ENCODE measurements at regions of chr19 and their contacts with region 1.

Region 1: DNA sequence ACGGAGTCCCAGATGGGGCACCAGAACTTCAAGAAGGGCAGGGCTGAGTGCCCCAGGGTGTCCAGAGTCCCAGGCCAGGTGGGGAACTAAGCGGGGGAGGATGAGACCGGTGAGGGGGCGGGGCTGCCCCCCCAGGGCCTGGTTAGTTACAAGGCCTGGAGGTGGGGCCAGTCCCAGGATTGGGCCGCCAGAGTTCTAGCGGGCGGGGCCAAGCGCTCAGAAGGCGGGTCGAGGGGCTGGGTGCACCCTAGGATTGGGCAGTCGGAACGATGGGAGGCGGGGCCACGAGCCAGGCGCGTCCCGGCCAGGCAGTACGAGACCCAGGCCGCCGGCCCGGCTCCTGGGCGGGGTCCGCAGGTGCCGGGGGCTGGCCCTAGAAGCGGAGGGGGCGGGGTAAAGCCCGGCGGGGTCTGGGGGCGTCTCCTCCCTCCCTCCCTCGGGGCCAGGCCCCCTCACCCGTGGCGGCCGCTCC is 571 bp downstream of the ZNF653 start:
- DNase-seq: peak; percentile 97
- ATAC-seq: peak; percentile 90
- H3K4me3 ChIP-seq: peak overlapping the region in 4 of 5 experiments; percentile 62 to 98 (median 82)
- H3K4me3 Mint-ChIP-seq: peak overlapping the region; percentile 87
- H3K27ac ChIP-seq: peak overlapping the region; percentile 65 to 98
- H3K27ac Mint-ChIP-seq: peak overlapping the region; percentile 93
- H3K4me1 ChIP-seq: peaks cover 9 to 13% of the 10 kb centered on the region in 2 donors
- H3K4me1 Mint-ChIP-seq: peaks cover 13% of the 10 kb centered on the region
- H3K27me3 ChIP-seq: no peaks in the 10 kb centered on the region
- H3K27me3 Mint-ChIP-seq: no peaks in the 10 kb centered on the region
- CTCF ChIP-seq: no peak

Region 2: GRCh38 chr19:11346092-11346940 is 158.8 kb before region 1 on chr19 and contains the starts of genes CCDC159 and TMEM205:
- CTCF ChIA-PET with region 1: no interaction called
- POLR2A ChIA-PET with region 1: no interaction called
- intact Hi-C with region 1: loop called (anchors 1 kb)
- DNase-seq: peak; percentile 99
- ATAC-seq: peak; percentile 97
- H3K4me3 ChIP-seq: peak within 1 kb of the TSS; percentile 67 to 97 (median 94)
- H3K4me3 Mint-ChIP-seq: peak within 1 kb of the TSS; percentile 99
- H3K27ac ChIP-seq: peak within 1 kb of the TSS; percentile 71 to 86
- H3K27ac Mint-ChIP-seq: peak within 1 kb of the TSS; percentile 96
- H3K4me1 ChIP-seq: peaks cover 11 to 20% of the 10 kb centered on the region in 2 donors
- H3K4me1 Mint-ChIP-seq: peaks cover 28% of the 10 kb centered on the region
- H3K27me3 ChIP-seq: no peaks in the 10 kb centered on the region
- H3K27me3 Mint-ChIP-seq: no peaks in the 10 kb centered on the region
- CTCF ChIP-seq: no peak
- total RNA-seq, gene CCDC159: 56.0 and 57.5 TPM in 2 replicates
- total RNA-seq, gene TMEM205: 48.5 and 53.4 TPM in 2 replicates

Region 3: GRCh38 chr19:11435058-11435832 is 69.8 kb before region 1 on chr19 and contains the starts of genes ODAD3 and PRKCSH:
- CTCF ChIA-PET with region 1: no interaction called
- POLR2A ChIA-PET with region 1: no interaction called
- intact Hi-C with region 1: loop called (anchors 1 kb)
- DNase-seq: peak; percentile 99
- ATAC-seq: peak; percentile 88
- H3K4me3 ChIP-seq: peak within 1 kb of the TSS; percentile 76 to 95 (median 80)
- H3K4me3 Mint-ChIP-seq: peak within 1 kb of the TSS; percentile 96
- H3K27ac ChIP-seq: peak within 1 kb of the TSS; percentile 70 to 92
- H3K27ac Mint-ChIP-seq: peak within 1 kb of the TSS; percentile 88
- H3K4me1 ChIP-seq: peaks cover 27 to 40% of the 10 kb centered on the region in 2 donors
- H3K4me1 Mint-ChIP-seq: peaks cover 29% of the 10 kb centered on the region
- H3K27me3 ChIP-seq: no peaks in the 10 kb centered on the region
- H3K27me3 Mint-ChIP-seq: no peaks in the 10 kb centered on the region
- CTCF ChIP-seq: peak; percentile 94
- total RNA-seq, gene ODAD3: 0.27 and 0.62 TPM in 2 replicates
- total RNA-seq, gene PRKCSH: 364 and 402 TPM in 2 replicates

Region 4: GRCh38 chr19:11475861-11476260 is 29.2 kb before region 1 on chr19:
- CTCF ChIA-PET with region 1: no interaction called
- POLR2A ChIA-PET with region 1: no interaction called
- intact Hi-C with region 1: no loop called
- DNase-seq: no peak
- ATAC-seq: no peak
- H3K4me3 ChIP-seq: no peak overlapping the region
- H3K4me3 Mint-ChIP-seq: no peak overlapping the region
- H3K27ac ChIP-seq: no peak overlapping the region
- H3K27ac Mint-ChIP-seq: no peak overlapping the region
- H3K4me1 ChIP-seq: peaks cover 13 to 20% of the 10 kb centered on the region in 2 donors
- H3K4me1 Mint-ChIP-seq: peaks cover 9% of the 10 kb centered on the region
- H3K27me3 ChIP-seq: peaks cover 0 to 32% (median 10%) of the 10 kb centered on the region in 4 experiments
- H3K27me3 Mint-ChIP-seq: peaks cover 23% of the 10 kb centered on the region
- CTCF ChIP-seq: no peak

Region 5: GRCh38 chr19:11528551-11529341 is 23.7 kb after region 1 on chr19 and contains the start of gene ECSIT:
- CTCF ChIA-PET with region 1: interaction called, 4 read pairs
- POLR2A ChIA-PET with region 1: no interaction called
- intact Hi-C with region 1: loop called (anchors 1 kb)
- DNase-seq: peak; percentile 95
- ATAC-seq: peak; percentile 99
- H3K4me3 ChIP-seq: peak within 1 kb of the TSS; percentile 45 to 83 (median 79)
- H3K4me3 Mint-ChIP-seq: peak within 1 kb of the TSS; percentile 98
- H3K27ac ChIP-seq: peak within 1 kb of the TSS; percentile 58 to 79
- H3K27ac Mint-ChIP-seq: peak within 1 kb of the TSS; percentile 95
- H3K4me1 ChIP-seq: peaks cover 7 to 19% of the 10 kb centered on the region in 2 donors
- H3K4me1 Mint-ChIP-seq: peaks cover 16% of the 10 kb centered on the region
- H3K27me3 ChIP-seq: no peaks in the 10 kb centered on the region
- H3K27me3 Mint-ChIP-seq: no peaks in the 10 kb centered on the region
- CTCF ChIP-seq: no peak
- total RNA-seq, gene ECSIT: 45.6 and 56.7 TPM in 2 replicates

Region 6: DNA sequence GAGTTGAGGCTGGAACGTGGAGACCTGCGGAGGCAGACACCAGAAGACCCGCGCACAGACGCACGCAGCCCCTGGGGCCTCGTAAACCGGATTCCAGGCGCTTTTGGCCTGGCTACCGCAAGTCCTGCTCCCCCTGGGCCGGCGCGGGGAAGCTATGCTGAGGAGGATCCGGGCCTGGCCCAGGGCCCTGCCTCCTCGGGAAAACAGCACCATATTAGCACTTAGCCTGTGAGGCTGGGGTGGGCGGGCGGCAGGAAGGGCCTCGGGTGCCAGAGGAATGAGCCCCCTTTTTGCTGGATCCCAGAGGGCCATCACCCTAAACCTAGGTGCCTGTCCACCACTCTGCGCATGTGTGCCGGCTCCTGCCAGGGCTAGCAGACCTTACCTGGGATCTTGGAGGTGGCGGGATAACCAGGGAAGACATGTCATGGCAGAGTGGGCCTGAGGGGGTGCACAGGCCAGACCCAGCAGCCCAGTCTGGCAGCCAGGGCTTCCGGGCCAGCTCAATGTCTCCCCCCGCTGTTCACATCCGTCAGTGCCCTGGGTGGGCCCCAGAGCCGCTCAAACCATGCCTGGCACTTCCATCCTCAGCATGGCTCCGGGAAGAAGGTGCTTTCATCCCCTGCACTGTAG is 46.7 kb after region 1 on chr19:
- CTCF ChIA-PET with region 1: no interaction called
- POLR2A ChIA-PET with region 1: no interaction called
- intact Hi-C with region 1: no loop called
- DNase-seq: no peak
- ATAC-seq: no peak
- H3K4me3 ChIP-seq: no peak overlapping the region
- H3K4me3 Mint-ChIP-seq: no peak overlapping the region
- H3K27ac ChIP-seq: no peak overlapping the region
- H3K27ac Mint-ChIP-seq: no peak overlapping the region
- H3K4me1 ChIP-seq: peaks cover 22 to 39% of the 10 kb centered on the region in 2 donors
- H3K4me1 Mint-ChIP-seq: peaks cover 38% of the 10 kb centered on the region
- H3K27me3 ChIP-seq: no peaks in the 10 kb centered on the region
- H3K27me3 Mint-ChIP-seq: no peaks in the 10 kb centered on the region
- CTCF ChIP-seq: no peak